Activated T-helper 2 cell treated with anti-CD3 and anti-CD28 coated beads, Interferon-gamma antibody, Interleukin-2, Interleukin-4, amounts not matched to agents 10 μg/mL and 5 μg/mL and 100 μg/mL, durations not matched to agents 14 hours and 24 hours and 36 hours (primary cell): ENCODE measurements at regions of chr4 and their contacts with region 1.

Region 1: GRCh38 chr4:99117876-99118693 is 26.0 kb downstream of the ADH4 start:
- DNase-seq: no peak
- H3K4me3 Mint-ChIP-seq: no peak overlapping the region
- H3K27ac Mint-ChIP-seq: no peak overlapping the region
- H3K4me1 Mint-ChIP-seq: no peaks in the 10 kb centered on the region
- H3K27me3 Mint-ChIP-seq: peaks cover 6% of the 10 kb centered on the region

Region 2: DNA sequence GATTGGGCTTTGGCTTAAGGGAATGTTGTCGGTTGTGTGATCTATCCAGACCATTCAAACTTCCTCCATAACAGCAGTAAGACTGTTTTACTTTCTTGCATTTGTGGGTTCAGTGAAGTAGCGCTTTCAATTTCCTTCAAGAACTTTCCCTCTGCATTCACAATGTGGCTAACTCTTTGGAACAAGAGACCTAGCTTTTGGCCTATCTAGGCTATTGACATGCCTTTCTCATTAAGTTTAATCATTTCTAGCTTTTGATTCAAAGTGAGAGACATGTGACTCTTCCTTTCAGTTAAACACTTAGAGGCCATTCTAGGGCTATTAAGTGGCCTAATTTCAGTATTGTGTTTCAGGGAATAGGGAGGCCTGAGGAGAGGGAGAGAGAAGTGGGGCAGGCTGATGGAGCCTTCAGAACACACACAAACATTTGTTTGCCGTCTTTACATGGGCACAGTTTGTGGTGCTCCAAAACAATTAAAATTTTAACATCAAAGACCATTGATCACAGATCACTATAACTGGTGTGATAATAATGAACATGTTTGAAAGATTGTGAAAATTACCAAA is 63.6 kb before region 1 on chr4:
- intact Hi-C with region 1: no loop called
- DNase-seq: no peak
- H3K4me3 Mint-ChIP-seq: no peak overlapping the region
- H3K27ac Mint-ChIP-seq: peak overlapping the region; percentile 75
- H3K4me1 Mint-ChIP-seq: peaks cover 41% of the 10 kb centered on the region
- H3K27me3 Mint-ChIP-seq: no peaks in the 10 kb centered on the region

Region 3: DNA sequence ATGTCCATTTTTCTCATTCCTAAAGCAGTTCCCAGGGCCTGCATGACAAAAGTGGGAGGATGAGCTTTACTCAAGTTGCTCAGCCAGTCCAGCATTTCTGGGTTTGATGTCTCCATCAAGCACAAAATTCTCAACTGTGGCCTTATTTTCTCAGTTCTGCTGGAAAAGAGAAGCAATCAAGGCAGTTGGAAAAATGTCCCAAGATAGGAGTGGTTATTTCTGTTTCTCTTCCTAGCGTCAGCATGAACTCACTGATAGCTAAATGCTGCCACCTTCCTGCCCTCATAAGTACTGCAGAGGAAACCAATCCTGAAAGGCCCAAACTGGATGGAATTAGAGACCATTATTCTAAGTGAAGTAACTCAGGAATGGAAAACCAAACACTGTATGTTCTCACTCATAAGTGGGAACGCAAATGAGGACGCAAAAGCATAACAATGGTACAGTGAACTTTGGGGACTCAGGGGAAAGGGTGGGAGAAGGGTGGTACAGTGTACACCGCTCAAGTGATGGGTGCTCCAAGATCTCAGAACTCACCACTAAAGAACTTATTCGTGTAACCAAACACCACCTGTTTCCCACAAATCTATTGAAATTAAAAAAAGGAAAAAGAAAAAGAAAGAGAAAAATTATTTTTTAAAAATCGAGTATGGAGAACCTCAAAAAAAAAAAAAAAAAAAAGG is 287.5 kb after region 1 on chr4:
- intact Hi-C with region 1: loop called (anchors 1 kb)
- DNase-seq: peak; percentile 13
- H3K4me3 Mint-ChIP-seq: no peak overlapping the region
- H3K27ac Mint-ChIP-seq: no peak overlapping the region
- H3K4me1 Mint-ChIP-seq: peaks cover 21% of the 10 kb centered on the region
- H3K27me3 Mint-ChIP-seq: peaks cover 10% of the 10 kb centered on the region

Region 4: DNA sequence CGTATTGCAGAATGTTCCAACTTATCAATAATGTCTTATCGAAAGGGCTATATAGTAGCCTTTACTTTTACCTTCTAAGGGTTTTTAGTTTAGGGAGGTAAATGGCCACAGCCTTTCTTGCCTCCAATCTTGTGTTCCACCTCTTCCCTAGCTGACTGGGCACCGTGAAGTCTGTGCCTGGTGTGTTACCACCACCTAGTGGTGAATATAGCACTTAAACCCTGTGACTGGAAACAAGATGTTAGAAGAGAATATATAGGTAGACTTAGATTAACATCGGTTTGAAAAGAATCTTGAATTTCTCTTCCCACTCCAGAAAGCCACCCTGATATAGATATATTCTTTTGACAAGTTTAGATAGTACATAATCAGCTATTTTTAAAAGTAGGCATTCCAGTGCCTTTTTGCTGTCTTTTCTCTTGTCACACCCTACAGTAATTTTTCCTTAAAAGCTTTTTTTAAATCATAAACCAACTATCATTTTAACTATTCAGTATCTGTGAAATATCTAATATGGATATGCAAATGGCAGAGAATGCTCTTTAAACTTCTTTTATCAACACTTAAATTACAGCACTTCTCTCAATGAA is 344.9 kb after region 1 on chr4:
- intact Hi-C with region 1: loop called (anchors 5 kb)
- DNase-seq: peak; percentile 23
- H3K4me3 Mint-ChIP-seq: no peak overlapping the region
- H3K27ac Mint-ChIP-seq: no peak overlapping the region
- H3K4me1 Mint-ChIP-seq: no peaks in the 10 kb centered on the region
- H3K27me3 Mint-ChIP-seq: peaks cover 29% of the 10 kb centered on the region